ENCODE measurements at regions of chr20 and their contacts with region 1.

Region 1: GRCh38 chr20:31723319-31724078 is 831 bp upstream of the BCL2L1 start:
- DNase-seq: peak; percentile 98 to 100 (median 99)
- H3K4me3 ChIP-seq: peak overlapping the region; percentile 99
- H3K4me3 Mint-ChIP-seq: peak overlapping the region; percentile 88 to 98 (median 96)
- H3K27ac ChIP-seq: peak overlapping the region; percentile 97
- H3K27ac Mint-ChIP-seq: peak overlapping the region; percentile 49 to 99 (median 97)
- H3K4me1 ChIP-seq: peaks cover 37% of the 10 kb centered on the region
- H3K4me1 Mint-ChIP-seq: peaks cover 39 to 44% (median 43%) of the 10 kb centered on the region in 3 donors
- H3K27me3 ChIP-seq: no peaks in the 10 kb centered on the region
- H3K27me3 Mint-ChIP-seq: peaks cover 0 to 3% of the 10 kb centered on the region in 2 donors

Region 2: GRCh38 chr20:31641391-31641790 is 82.1 kb before region 1 on chr20:
- CTCF ChIA-PET with region 1: interaction called, 16 read pairs
- POLR2A ChIA-PET with region 1: no interaction called
- DNase-seq: no peak
- H3K4me3 ChIP-seq: no peak overlapping the region
- H3K4me3 Mint-ChIP-seq: no peak overlapping the region
- H3K27ac ChIP-seq: no peak overlapping the region
- H3K27ac Mint-ChIP-seq: no peak overlapping the region
- H3K4me1 ChIP-seq: peaks cover 8% of the 10 kb centered on the region
- H3K4me1 Mint-ChIP-seq: peaks cover 7 to 22% (median 12%) of the 10 kb centered on the region in 3 donors
- H3K27me3 ChIP-seq: peaks cover 9% of the 10 kb centered on the region
- H3K27me3 Mint-ChIP-seq: peaks cover 2 to 24% of the 10 kb centered on the region in 2 donors

Region 3: DNA sequence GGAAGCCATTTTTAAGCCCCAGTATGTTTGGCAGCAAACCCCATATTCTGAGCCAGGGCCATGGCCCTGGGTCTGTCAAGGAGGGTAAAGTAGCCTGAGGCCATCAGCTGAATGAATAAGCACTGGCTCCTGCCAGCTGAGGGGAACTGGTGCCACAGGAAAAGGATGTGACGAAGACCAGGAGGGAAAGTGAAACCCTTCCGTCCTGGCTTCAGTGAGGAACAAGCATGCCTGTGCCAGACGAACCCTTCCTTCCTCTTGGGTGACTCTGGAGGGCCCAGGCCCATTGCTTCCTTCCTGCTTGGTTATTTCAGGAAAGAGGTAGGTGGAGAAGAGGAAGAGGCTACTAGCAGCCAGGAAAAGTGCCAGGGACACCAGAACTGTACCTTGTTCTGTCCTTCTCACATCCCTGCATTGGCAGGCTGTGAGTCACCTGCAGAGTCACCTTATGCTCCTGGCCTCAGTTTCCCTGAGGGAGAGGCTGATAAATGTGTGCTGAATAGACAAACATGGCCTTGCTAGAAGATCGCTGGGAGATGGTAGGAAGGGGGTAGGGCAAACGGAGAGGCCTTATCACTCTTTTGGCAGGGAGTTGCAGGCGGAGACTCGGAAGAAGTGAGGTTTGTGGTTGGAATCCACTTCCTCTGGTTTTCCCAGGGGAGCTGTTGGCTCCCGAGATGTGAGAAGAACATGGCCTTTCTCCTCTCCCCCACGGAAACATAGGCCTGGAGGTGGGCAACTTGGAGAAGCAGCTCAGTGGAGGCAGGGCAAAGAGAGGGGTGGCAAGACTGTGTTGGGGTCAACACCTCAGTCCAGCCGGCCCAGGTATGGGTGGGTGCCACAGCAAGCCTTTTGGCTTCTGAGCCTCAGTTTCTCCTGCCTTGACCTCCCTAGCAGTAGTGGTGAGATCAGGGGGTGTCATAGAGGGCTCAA is 48.3 kb before region 1 on chr20:
- CTCF ChIA-PET with region 1: interaction called, 138 read pairs
- POLR2A ChIA-PET with region 1: interaction called, 35 read pairs
- DNase-seq: peak; percentile 59 to 77 (median 67)
- H3K4me3 ChIP-seq: peak overlapping the region; percentile 80
- H3K4me3 Mint-ChIP-seq: peak overlapping the region; percentile 88 to 97 (median 94)
- H3K27ac ChIP-seq: peak overlapping the region; percentile 86
- H3K27ac Mint-ChIP-seq: peak overlapping the region; percentile 95 to 100 (median 98)
- H3K4me1 ChIP-seq: peaks cover 79% of the 10 kb centered on the region
- H3K4me1 Mint-ChIP-seq: peaks cover 76 to 87% (median 77%) of the 10 kb centered on the region in 3 donors
- H3K27me3 ChIP-seq: no peaks in the 10 kb centered on the region
- H3K27me3 Mint-ChIP-seq: no peaks in the 10 kb centered on the region

Region 4: GRCh38 chr20:31698803-31699718 is 24.4 kb before region 1 on chr20:
- CTCF ChIA-PET with region 1: interaction called, 17 read pairs
- POLR2A ChIA-PET with region 1: no interaction called
- DNase-seq: no peak
- H3K4me3 ChIP-seq: no peak overlapping the region
- H3K4me3 Mint-ChIP-seq: peak overlapping the region in 1 of 7 donors; percentile 55
- H3K27ac ChIP-seq: peak overlapping the region; percentile 17
- H3K27ac Mint-ChIP-seq: peak overlapping the region; percentile 39 to 95 (median 86)
- H3K4me1 ChIP-seq: peaks cover 32% of the 10 kb centered on the region
- H3K4me1 Mint-ChIP-seq: peaks cover 58 to 67% (median 61%) of the 10 kb centered on the region in 3 donors
- H3K27me3 ChIP-seq: no peaks in the 10 kb centered on the region
- H3K27me3 Mint-ChIP-seq: no peaks in the 10 kb centered on the region

Region 5: DNA sequence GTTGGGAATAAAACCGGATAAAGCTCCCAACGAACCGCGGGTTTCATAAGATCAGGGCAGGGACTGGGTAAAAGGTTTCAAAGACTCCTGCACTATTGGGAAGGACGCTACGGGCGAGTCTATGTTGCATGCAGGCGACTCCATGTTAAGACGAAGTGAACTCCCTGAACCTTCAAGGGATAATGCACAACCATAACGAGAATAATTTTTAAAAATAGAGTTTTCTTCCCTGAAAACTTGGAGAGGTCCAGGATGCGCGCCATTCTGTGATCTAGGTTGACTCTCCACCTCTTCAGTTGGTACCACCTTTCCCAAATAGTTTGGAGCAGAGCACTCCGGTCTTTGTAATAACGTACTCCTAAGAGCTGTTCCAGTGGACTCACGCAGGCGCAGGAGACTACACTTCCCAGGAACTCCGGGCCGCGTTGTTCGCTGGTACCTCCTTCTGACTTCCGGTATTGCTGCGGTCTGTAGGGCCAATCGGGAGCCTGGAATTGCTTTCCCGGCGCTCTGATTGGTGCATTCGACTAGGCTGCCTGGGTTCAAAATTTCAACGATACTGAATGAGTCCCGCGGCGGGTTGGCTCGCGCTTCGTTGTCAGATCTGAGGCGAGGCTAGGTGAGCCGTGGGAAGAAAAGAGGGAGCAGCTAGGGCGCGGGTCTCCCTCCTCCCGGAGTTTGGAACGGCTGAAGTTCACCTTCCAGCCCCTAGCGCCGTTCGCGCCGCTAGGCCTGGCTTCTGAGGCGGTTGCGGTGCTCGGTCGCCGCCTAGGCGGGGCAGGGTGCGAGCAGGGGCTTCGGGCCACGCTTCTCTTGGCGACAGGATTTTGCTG is 15.4 kb after region 1 on chr20 and contains the start of gene TPX2:
- CTCF ChIA-PET with region 1: interaction called, 26 read pairs
- POLR2A ChIA-PET with region 1: interaction called, 7 read pairs
- DNase-seq: peak; percentile 63 to 79 (median 71)
- H3K4me3 ChIP-seq: peak within 1 kb of the TSS; percentile 47
- H3K4me3 Mint-ChIP-seq: no peak within 1 kb of the TSS
- H3K27ac ChIP-seq: peak within 1 kb of the TSS; percentile 76
- H3K27ac Mint-ChIP-seq: no peak within 1 kb of the TSS
- H3K4me1 ChIP-seq: peaks cover 13% of the 10 kb centered on the region
- H3K4me1 Mint-ChIP-seq: peaks cover 0 to 2% (median 0%) of the 10 kb centered on the region in 3 donors
- H3K27me3 ChIP-seq: no peaks in the 10 kb centered on the region
- H3K27me3 Mint-ChIP-seq: peaks cover 0 to 2% of the 10 kb centered on the region in 2 donors
- total RNA-seq, gene TPX2: 60.3 to 62.7 TPM

Region 6: DNA sequence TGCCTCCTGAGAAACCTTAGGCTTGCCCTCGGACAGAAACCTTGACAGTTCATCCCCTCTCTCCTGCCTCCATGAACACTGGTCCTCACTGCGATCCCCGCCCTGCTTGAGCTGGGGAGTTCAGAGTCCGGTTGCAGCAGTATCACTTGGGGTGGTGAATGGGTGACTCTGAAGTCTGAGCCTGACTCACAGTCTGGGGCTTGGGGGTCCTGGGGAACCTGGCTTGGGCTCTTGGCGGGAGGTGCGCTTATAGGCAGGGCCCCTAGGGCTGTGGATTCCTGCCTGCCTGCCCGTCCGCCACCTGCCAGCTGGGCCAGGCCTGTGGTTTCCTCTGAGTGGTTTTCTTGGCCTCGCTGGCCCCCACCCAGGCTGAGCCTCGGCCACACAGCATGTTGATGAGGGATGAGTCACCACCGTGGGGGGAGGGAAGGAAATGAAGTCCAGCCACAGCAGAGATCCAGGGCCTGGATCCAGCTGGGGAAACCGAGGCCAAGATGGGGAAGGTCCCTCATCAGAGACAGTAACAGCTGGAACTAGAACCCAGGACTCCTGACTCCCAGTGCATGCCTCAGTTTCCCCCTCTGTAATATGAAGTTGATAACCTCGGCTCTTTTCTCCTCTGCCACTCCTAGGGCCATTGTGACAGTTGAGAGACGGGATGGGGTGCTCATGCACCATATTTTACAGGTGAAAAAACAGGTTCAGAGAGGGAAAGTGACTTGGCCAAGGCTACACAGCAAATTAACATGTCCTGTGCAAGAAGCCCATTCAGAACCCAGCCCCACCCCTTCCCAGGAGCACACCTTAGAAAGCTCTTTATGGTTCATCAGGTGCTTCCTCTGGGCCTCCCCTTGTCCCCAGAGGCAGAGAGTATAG is 112.7 kb after region 1 on chr20:
- CTCF ChIA-PET with region 1: no interaction called
- POLR2A ChIA-PET with region 1: no interaction called
- DNase-seq: no peak
- H3K4me3 ChIP-seq: no peak overlapping the region
- H3K4me3 Mint-ChIP-seq: peak overlapping the region in 1 of 7 donors; percentile 44
- H3K27ac ChIP-seq: no peak overlapping the region
- H3K27ac Mint-ChIP-seq: peak overlapping the region in 1 of 8 donors; percentile 84
- H3K4me1 ChIP-seq: peaks cover 9% of the 10 kb centered on the region
- H3K4me1 Mint-ChIP-seq: peaks cover 7 to 11% (median 10%) of the 10 kb centered on the region in 3 donors
- H3K27me3 ChIP-seq: no peaks in the 10 kb centered on the region
- H3K27me3 Mint-ChIP-seq: no peaks in the 10 kb centered on the region